Colonic mucosa (tissue), 4 donors: ENCODE measurements at regions of chr7 and their contacts with region 1.

Region 1: GRCh38 chr7:73738612-73739374 is at the start of gene ABHD11:
- DNase-seq: peak; percentile 100
- H3K4me3 ChIP-seq: peak within 1 kb of the TSS; percentile 81
- H3K27ac ChIP-seq: peak within 1 kb of the TSS; percentile 95
- H3K4me1 ChIP-seq: peaks cover 4% of the 10 kb centered on the region
- H3K27me3 ChIP-seq: no peaks in the 10 kb centered on the region
- CTCF ChIP-seq: no peak
- total RNA-seq, gene ABHD11: 109 to 123 TPM

Region 2: DNA sequence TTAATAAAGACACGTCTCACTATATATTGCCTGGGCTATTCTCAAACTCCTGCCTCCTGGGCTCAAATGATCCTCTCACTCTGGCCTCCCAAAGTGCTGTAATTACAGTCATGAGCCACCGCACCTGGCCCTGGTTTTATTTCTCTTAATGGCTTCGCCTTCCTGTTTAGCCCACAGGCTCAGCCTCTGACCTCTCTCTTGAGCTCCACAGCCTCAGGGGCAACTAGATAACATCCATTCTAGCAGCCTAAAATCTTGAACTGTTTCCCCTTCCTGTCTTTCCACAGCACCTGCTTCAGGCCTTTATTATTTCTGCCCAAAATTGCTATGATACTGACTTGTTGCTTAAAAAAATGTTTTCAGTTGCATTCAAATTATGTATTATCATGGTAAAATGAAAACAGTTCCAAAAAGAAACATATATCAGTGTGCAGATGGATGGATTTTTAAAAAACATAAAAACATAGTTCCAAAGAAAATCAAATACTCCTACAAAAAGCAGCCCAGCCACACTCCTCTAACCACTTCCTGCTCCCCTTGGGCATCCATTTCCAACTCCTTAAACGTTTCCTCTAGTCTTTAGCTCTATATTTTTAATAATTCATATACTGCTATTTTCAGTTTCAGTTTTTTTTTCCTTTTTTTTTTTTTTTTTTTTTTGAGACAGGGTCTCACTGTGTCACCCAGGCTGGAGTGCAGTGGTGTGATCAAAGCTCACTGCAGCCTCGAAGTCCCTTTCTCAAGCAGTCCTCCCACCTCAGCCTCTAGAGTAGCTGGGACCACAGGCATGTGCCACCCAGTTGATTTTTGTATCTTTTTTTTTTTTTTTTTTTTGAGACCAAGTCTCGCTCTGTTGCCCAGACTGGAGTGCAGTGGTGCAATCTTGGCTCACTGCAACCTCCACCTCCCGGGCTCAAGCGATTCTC is 211.6 kb before region 1 on chr7:
- intact Hi-C with region 1: no loop called
- DNase-seq: no peak
- H3K4me3 ChIP-seq: no peak overlapping the region
- H3K27ac ChIP-seq: no peak overlapping the region
- H3K4me1 ChIP-seq: no peaks in the 10 kb centered on the region
- H3K27me3 ChIP-seq: no peaks in the 10 kb centered on the region
- CTCF ChIP-seq: no peak

Region 3: GRCh38 chr7:73769992-73770859 is 31.4 kb after region 1 on chr7 and contains the start of gene CLDN3:
- intact Hi-C with region 1: loop called (anchors 2 kb)
- DNase-seq: peak; percentile 95
- H3K4me3 ChIP-seq: peak within 1 kb of the TSS; percentile 58
- H3K27ac ChIP-seq: peak within 1 kb of the TSS; percentile 72
- H3K4me1 ChIP-seq: no peaks in the 10 kb centered on the region
- H3K27me3 ChIP-seq: peaks cover 6% of the 10 kb centered on the region
- CTCF ChIP-seq: no peak
- total RNA-seq, gene CLDN3: 599 to 634 TPM

Region 4: DNA sequence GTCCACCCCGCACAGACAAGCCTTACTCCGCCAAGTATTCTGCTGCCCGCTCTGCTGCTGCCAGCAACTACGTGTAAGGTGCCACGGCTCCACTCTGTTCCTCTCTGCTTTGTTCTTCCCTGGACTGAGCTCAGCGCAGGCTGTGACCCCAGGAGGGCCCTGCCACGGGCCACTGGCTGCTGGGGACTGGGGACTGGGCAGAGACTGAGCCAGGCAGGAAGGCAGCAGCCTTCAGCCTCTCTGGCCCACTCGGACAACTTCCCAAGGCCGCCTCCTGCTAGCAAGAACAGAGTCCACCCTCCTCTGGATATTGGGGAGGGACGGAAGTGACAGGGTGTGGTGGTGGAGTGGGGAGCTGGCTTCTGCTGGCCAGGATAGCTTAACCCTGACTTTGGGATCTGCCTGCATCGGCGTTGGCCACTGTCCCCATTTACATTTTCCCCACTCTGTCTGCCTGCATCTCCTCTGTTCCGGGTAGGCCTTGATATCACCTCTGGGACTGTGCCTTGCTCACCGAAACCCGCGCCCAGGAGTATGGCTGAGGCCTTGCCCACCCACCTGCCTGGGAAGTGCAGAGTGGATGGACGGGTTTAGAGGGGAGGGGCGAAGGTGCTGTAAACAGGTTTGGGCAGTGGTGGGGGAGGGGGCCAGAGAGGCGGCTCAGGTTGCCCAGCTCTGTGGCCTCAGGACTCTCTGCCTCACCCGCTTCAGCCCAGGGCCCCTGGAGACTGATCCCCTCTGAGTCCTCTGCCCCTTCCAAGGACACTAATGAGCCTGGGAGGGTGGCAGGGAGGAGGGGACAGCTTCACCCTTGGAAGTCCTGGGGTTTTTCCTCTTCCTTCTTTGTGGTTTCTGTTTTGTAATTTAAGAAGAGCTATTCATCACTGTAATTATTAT is 93.2 kb after region 1 on chr7:
- intact Hi-C with region 1: loop called (anchors 5 kb)
- DNase-seq: peak; percentile 89
- H3K4me3 ChIP-seq: peak overlapping the region; percentile 50
- H3K27ac ChIP-seq: peak overlapping the region; percentile 85
- H3K4me1 ChIP-seq: peaks cover 3% of the 10 kb centered on the region
- H3K27me3 ChIP-seq: no peaks in the 10 kb centered on the region
- CTCF ChIP-seq: no peak

Region 5: GRCh38 chr7:73858807-73859206 is 120.0 kb after region 1 on chr7:
- intact Hi-C with region 1: loop called (anchors 5 kb)
- DNase-seq: no peak
- H3K4me3 ChIP-seq: no peak overlapping the region
- H3K27ac ChIP-seq: no peak overlapping the region
- H3K4me1 ChIP-seq: no peaks in the 10 kb centered on the region
- H3K27me3 ChIP-seq: no peaks in the 10 kb centered on the region
- CTCF ChIP-seq: no peak